HEK293T (cell line): ENCODE measurements at regions of chr5 and their contacts with region 1.

Region 1: GRCh38 chr5:102411-103043 is 10.6 kb downstream of the PLEKHG4B start:
- DNase-seq: no peak

Region 2: DNA sequence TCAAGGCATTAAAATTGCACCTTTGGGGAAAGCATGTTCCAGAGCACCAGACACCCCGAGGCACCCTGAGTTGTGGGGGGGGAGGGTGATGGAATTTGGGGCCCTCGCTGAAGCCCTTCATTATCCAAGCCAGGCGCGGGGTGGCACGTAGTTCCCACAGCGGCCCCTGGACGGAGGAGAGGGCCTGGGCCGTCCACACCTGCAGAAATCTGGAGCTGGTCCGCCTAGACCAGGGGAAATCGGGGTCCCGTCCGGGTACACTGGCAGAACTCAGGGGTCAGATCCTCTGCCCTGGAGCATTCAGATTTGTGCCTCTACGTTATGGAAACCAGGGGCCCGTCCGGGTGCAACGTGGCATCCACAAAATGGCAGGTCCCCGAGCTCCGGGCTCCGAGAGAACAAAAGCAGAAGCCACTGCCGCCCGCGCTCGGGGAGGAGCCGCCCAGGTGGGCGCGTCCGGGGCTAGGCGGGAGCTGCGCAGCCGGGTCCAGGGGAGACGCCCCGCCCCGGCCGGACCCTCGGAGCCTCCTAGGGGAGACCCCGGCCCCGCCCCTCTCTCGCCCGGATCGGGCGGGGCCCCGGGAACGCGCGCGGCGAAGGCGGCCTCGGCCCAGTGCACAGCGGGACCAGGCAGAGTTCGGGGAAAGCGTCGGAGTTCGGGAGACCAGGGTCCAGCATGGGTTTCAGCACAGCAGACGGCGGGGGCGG is 10.8 kb before region 1 on chr5 and contains the start of gene PLEKHG4B:
- CTCF ChIA-PET with region 1: no interaction called
- POLR2A ChIA-PET with region 1: interaction called, 12 read pairs
- DNase-seq: peak; percentile 47

Region 3: DNA sequence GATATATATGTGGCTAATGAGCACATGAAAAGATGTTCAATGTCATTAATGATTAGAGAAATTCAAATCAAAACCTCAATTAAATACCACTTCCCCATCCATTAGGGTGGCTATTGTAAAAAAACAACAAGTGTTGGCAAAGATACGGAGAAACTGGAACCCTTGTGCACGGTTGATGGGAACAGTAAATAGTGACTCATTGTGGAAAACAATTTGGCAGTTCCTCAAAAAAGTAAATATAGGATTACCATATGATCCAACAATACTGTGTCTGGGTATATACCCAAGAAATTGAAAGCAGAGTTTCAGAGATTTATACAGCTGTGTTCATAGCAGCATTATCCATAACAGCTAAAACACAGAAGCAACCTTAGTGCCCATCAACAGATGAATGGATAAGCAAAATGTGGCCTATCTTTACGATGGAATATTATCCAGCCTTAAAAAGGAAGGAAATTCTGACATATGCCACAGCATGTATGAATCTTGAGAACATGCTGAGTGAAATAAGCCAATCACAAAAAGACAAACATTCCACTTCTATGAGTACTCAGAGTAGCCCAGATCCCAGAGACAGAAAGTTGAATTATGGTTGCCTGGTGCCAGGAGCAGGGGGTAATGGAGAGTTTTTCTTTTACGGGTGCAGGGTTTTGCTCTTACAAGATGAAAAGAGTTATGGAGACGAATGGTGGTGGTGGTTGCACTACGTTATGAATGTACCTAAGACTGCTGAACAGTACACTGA is 47.4 kb after region 1 on chr5:
- CTCF ChIA-PET with region 1: no interaction called
- POLR2A ChIA-PET with region 1: no interaction called
- DNase-seq: no peak